Heart left ventricle (tissue), 16 donors: ENCODE measurements at regions of chr10 and their contacts with region 1.

Region 1: DNA sequence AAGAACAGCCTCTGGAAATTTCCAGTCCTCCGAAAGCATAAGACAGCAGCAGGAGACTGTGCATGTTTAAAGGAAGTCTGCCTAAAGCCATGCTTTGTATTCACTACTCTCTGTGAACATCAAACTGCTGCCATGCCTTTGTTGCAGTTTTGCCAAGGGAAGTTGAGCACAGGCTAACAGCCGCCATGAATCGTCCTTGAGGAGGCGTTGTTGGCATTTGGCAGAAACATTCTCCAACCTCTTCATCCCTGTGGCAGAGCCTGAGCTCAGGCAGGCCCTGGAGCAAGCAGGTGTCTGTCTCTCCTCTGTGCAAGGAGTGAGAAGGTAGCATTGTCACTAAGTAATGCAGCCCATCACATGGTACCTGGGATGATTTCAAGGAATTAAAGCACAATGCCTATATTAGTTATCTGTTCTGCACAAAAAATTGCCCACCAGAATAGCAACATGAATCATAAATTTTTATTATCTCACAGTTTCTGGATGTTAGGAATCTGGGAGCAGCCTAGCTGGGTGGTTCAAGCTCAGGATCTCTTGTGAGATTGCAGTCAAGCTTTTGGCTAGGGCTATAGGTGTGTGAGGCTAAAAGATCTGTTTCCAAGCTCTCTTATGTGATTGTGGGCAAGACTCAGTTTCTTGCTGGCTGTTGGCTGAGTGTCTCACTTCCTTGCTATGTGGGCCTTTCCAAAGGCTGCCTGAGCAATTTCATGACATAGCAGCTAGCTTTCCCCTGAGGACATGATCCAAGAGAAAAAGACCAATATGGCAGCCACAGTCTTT is 46.5 kb upstream of the KIAA1217 start:
- DNase-seq: no peak
- ATAC-seq: no peak
- H3K4me3 ChIP-seq: no peak overlapping the region
- H3K27ac ChIP-seq: no peak overlapping the region
- H3K4me1 ChIP-seq: peaks cover 0 to 21% (median 3%) of the 10 kb centered on the region in 12 donors
- H3K27me3 ChIP-seq: no peaks in the 10 kb centered on the region
- CTCF ChIP-seq: no peak
- POLR2A ChIP-seq: no peak

Region 2: GRCh38 chr10:24128066-24128730 is 34.2 kb before region 1 on chr10:
- intact Hi-C with region 1: loop called in 1 of 10 experiments (anchors 5 kb)
- DNase-seq: no peak
- ATAC-seq: no peak
- H3K4me3 ChIP-seq: no peak overlapping the region
- H3K27ac ChIP-seq: no peak overlapping the region
- H3K4me1 ChIP-seq: peaks cover 0 to 22% (median 10%) of the 10 kb centered on the region in 12 donors
- H3K27me3 ChIP-seq: no peaks in the 10 kb centered on the region
- CTCF ChIP-seq: no peak
- POLR2A ChIP-seq: no peak